ENCODE measurements at regions of chr12 and their contacts with region 1.

Region 1: DNA sequence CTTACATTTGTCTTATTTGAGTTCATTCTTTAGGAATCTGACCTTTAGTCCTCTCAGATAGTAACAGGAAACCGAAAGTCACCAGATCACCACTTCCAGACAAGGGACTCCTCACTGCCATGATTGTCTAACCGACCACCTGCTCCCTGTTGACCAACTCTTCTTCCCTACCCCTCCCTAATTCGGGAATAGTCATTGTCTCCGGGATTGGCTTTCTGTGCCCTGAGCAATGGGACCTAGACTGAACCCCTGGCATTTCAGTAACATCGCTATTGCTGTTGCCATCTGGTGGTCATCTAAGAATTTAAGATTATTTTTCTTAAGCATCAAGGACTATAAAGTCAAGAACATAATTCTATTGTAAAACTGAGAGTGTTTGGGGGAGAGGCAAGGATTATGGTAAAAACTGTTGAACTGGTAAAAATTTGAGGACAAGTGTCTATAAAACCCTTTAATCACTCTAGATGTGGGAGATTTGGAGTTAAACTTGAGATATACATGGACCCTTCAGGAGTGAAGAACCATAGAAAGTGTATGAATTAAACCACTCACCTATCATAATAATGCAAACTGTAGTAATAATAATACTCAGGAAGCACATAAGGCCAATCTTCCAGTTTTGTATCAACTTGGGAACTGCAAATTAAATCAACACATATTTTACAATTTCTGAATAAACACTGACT is 6.3 kb downstream of the CLEC2A start:
- DNase-seq: no peak
- H3K4me3 Mint-ChIP-seq: peak overlapping the region; percentile 66
- H3K27ac Mint-ChIP-seq: no peak overlapping the region
- H3K4me1 Mint-ChIP-seq: peaks cover 22% of the 10 kb centered on the region
- H3K27me3 Mint-ChIP-seq: peaks cover 13% of the 10 kb centered on the region

Region 2: DNA sequence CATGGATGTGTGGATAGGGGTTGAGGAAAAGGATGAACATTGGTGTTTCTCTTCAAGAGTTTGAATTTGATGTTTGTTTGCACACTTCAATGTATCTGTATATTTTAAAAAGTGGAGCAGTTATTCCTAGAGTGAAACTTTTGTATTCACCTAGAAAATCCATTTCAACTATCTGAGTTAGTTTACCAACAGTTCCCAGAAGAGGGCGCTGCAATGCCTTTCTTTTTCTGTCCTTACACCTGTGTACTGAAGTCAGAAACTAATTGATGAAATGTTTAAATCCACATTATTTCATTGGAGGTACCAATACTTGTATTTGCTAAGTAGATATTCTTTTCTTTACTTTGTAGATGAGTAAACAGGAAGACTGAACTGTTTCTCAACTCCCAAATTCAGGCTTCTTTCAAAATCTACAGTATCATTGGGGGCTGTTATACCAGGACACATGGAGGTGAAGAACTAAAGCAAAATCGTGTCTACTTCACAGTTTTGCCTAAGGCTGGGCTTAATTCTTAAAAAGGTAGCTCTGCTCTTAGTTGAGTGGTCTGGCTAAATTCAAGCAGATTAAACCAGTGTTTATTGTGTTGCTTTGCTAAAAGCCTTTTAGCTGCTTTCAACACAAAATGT is 291.6 kb before region 1 on chr12:
- intact Hi-C with region 1: loop called (anchors 10 kb)
- DNase-seq: peak; percentile 64
- H3K4me3 Mint-ChIP-seq: peak overlapping the region; percentile 60
- H3K27ac Mint-ChIP-seq: peak overlapping the region; percentile 63
- H3K4me1 Mint-ChIP-seq: peaks cover 60% of the 10 kb centered on the region
- H3K27me3 Mint-ChIP-seq: peaks cover 3% of the 10 kb centered on the region